ENCODE measurements at regions of chr13 and their contacts with region 1.

Region 1: GRCh38 chr13:110306960-110307746 is at the starts of genes COL4A1 and COL4A2:
- DNase-seq: peak; percentile 81 to 86
- ATAC-seq: peak; percentile 69 to 88 (median 82)
- H3K4me3 ChIP-seq: peak within 1 kb of the TSS; percentile 81 to 98 (median 96)
- H3K27ac ChIP-seq: peak within 1 kb of the TSS; percentile 95 to 99 (median 97)
- H3K4me1 ChIP-seq: peaks cover 30 to 75% (median 66%) of the 10 kb centered on the region in 9 donors
- H3K27me3 ChIP-seq: peaks cover 0 to 85% (median 0%) of the 10 kb centered on the region in 7 donors
- CTCF ChIP-seq: peak in 2 of 9 donors; percentile 5 to 7
- total RNA-seq, gene COL4A1: 96.3 to 342 (median 147) TPM
- total RNA-seq, gene COL4A2: 81.7 to 301 (median 128) TPM

Region 2: DNA sequence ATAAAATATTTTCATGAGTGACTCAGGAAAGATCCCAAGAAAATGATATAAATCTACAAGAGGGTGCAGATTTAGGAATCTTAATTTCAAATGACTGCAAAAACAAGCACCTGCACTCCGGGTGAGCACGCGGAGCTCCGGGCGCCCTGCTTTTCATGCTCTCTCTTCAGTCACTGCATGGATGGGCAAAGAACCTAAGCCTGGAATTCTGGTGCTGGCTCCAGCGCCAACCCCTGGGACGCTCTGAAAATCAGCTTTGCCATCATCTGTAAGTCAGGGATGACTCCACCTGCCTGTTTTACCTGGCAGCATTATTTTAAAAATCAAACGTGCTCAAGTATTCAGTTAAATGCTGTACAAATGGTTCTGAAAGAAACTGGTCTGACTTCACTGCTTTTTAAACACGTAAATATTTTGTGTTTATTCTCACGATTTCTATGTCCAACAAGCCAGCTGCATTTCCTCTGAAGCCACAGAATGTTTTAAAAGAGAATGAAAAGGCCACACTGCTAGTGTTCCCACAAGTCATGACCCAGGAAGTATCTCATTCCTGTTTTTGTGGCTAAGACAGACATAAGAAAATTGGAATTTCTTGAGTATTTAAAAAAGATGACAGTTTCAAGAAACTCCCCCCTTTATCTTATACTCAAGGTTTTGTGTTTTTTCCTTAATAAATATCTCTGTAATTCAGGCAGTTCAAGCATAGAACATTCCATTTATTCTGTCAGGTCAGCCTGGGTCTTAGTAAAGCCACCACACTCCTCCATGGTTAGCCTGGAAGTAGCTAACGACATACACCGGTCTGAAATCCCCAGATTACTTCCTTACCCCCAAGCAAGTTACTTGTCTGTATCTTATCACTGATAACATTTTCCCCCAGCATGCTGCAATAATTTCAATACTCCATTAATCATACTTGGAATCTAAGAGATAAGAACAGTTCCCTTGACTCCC is 81.3 kb before region 1 on chr13:
- intact Hi-C with region 1: loop called in 6 of 10 experiments (anchors 5 to 10 kb)
- DNase-seq: no peak
- ATAC-seq: no peak
- H3K4me3 ChIP-seq: no peak overlapping the region
- H3K27ac ChIP-seq: peak overlapping the region in 9 of 10 donors; percentile 15 to 76 (median 52)
- H3K4me1 ChIP-seq: peaks cover 5 to 90% (median 63%) of the 10 kb centered on the region in 9 donors
- H3K27me3 ChIP-seq: no peaks in the 10 kb centered on the region
- CTCF ChIP-seq: no peak

Region 3: GRCh38 chr13:110244071-110244830 is 62.9 kb before region 1 on chr13:
- intact Hi-C with region 1: loop called in 4 of 10 experiments (anchors 5 to 10 kb)
- DNase-seq: peak in 1 of 2 donors; percentile 59
- ATAC-seq: peak in 7 of 8 donors; percentile 11 to 52 (median 36)
- H3K4me3 ChIP-seq: no peak overlapping the region
- H3K27ac ChIP-seq: peak overlapping the region; percentile 9 to 89 (median 71)
- H3K4me1 ChIP-seq: peaks cover 31 to 99% (median 89%) of the 10 kb centered on the region in 9 donors
- H3K27me3 ChIP-seq: no peaks in the 10 kb centered on the region
- CTCF ChIP-seq: no peak

Region 4: GRCh38 chr13:110340812-110341444 is 33.8 kb after region 1 on chr13:
- intact Hi-C with region 1: loop called in 2 of 10 experiments (anchors 2 to 5 kb)
- DNase-seq: peak; percentile 79 to 91
- ATAC-seq: peak; percentile 57 to 85 (median 74)
- H3K4me3 ChIP-seq: peak overlapping the region in 7 of 10 donors; percentile 2 to 34 (median 25)
- H3K27ac ChIP-seq: peak overlapping the region; percentile 63 to 96 (median 90)
- H3K4me1 ChIP-seq: peaks cover 28 to 85% (median 70%) of the 10 kb centered on the region in 9 donors
- H3K27me3 ChIP-seq: peaks cover 0 to 7% (median 0%) of the 10 kb centered on the region in 7 donors
- CTCF ChIP-seq: peak in 1 of 9 donors; percentile 14

Measured in heart right ventricle (tissue), 16 donors.